ENCODE measurements at regions of chr17 and their contacts with region 1.

Region 1: GRCh38 chr17:1716076-1716995 is 6.2 kb upstream of the TLCD2 start:
- DNase-seq: peak; percentile 100

Region 2: DNA sequence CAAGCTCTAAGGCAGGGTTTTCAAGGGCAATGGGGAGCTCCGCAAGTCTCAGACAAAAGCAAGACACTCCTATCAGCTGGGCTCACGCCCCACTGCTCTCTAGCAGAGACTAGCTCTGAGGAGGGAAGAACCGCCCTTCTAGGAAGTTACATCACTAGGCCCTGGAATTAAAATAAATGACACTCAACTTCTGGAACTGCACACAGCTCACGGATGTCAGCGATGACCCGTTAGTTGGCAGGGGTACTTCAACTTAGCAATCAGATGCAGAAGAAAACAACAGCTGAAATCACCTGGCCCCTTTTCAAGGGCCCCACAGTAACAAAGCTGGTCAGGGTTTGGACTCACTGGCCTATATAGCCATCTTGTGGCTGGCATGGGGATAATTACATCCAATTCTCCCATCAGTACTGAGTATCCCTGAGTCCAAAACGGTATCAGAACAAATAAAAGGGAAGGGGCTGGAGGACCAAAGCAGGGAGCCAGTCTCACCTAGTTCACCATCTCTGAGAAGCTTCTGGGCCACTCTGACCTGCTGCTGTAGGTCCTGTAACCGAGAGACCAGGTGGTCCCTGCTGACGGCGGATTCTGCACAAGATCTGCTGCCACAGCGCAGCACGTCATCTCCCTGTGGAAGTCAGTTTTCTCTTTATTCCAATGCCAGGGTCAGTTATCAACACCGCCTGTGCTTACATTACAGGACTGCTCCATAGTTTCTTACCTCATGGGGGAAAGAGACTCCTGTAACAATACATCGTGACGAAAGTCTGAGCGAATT is 67.7 kb after region 1 on chr17:
- in situ Hi-C with region 1: loop called (anchors 10 kb)
- DNase-seq: peak; percentile 70

Region 3: GRCh38 chr17:1890758-1891450 is 174.6 kb after region 1 on chr17:
- in situ Hi-C with region 1: no loop called
- DNase-seq: no peak